ENCODE measurements at regions of chr9 and their contacts with region 1.

Region 1: DNA sequence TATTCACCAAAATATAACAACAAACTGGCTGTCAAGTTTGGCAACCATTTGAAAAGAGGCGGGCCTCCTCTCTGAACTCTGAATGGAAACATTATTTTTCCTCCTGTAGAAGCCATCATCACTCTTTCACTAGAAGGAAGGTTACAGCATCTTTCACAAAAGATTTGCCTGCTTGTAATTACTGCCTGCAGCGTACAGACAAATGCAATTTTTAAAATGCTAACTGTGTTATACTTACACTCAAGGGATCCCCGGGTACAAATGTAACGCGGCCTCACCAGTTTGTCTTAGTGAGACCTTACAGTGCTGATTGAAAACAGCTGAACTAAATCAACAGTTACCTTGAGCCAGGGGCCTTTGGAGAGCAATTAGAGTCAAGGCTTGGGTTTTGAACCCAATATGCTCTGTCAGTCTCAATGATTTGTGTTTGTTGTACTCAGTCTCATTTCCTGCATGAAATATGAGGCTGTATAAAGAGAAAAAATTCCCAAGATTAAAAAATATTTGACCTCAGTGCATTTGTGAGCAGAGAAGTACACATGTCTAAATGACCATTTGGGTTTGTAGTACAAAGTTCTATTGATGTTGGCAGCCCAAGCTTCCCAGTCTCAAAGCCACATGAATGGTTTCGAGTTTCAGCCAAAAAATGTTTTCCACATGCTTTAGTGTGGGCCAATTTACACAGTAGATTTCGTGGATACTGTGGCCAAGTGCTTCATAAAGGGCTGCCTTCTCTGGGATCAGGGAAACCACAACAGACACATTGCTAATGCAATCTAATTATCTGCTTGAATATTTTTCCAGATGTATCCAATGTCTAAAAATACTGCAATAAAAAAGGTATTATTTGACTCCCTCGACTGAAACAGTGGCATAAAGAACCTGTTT is 500.0 kb downstream of the SPATA31D1 start:
- DNase-seq: peak; percentile 81
- H3K4me3 ChIP-seq: no peak overlapping the region
- H3K27ac ChIP-seq: peak overlapping the region; percentile 72
- H3K4me1 ChIP-seq: peaks cover 18% of the 10 kb centered on the region
- H3K27me3 ChIP-seq: no peaks in the 10 kb centered on the region
- CTCF ChIP-seq: no peak

Region 2: GRCh38 chr9:82202808-82203207 is 285.7 kb before region 1 on chr9:
- CTCF ChIA-PET with region 1: no interaction called
- dilution Hi-C with region 1: no loop called
- in situ Hi-C with region 1: no loop called
- intact Hi-C with region 1: loop called (anchors 10 kb)
- DNase-seq: peak; percentile 81
- H3K4me3 ChIP-seq: no peak overlapping the region
- H3K27ac ChIP-seq: no peak overlapping the region
- H3K4me1 ChIP-seq: peaks cover 13% of the 10 kb centered on the region
- H3K27me3 ChIP-seq: no peaks in the 10 kb centered on the region
- CTCF ChIP-seq: no peak

Region 3: GRCh38 chr9:82271106-82271561 is 217.4 kb before region 1 on chr9:
- CTCF ChIA-PET with region 1: no interaction called
- dilution Hi-C with region 1: no loop called
- in situ Hi-C with region 1: no loop called
- intact Hi-C with region 1: loop called (anchors 10 kb)
- DNase-seq: peak; percentile 55
- H3K4me3 ChIP-seq: no peak overlapping the region
- H3K27ac ChIP-seq: no peak overlapping the region
- H3K4me1 ChIP-seq: peaks cover 16% of the 10 kb centered on the region
- H3K27me3 ChIP-seq: no peaks in the 10 kb centered on the region
- CTCF ChIP-seq: no peak

Region 4: DNA sequence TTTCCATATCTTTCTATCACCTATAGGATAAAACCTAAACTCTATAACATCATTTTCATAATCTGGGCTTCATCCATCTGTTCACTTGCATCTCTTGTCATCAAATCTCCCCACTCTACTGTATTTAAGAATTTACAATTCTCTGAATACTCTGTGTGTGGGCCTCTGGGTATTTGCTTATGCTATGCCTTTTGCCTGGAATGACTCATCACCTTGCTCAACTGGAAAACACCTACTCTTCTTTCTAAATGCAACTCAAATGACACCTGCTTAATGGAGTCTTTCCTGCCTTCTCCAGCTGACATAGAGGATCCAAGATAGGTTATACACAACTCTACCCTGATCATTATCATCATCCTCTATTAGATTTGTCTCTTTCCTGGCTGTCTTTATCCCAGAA is 78.3 kb before region 1 on chr9:
- CTCF ChIA-PET with region 1: no interaction called
- dilution Hi-C with region 1: no loop called
- in situ Hi-C with region 1: no loop called
- intact Hi-C with region 1: loop called (anchors 2 kb)
- DNase-seq: peak; percentile 81
- H3K4me3 ChIP-seq: no peak overlapping the region
- H3K27ac ChIP-seq: no peak overlapping the region
- H3K4me1 ChIP-seq: peaks cover 25% of the 10 kb centered on the region
- H3K27me3 ChIP-seq: no peaks in the 10 kb centered on the region
- CTCF ChIP-seq: no peak

Region 5: GRCh38 chr9:82539856-82540579 is 51.5 kb after region 1 on chr9:
- CTCF ChIA-PET with region 1: no interaction called
- dilution Hi-C with region 1: no loop called
- in situ Hi-C with region 1: no loop called
- intact Hi-C with region 1: no loop called
- DNase-seq: peak; percentile 82
- H3K4me3 ChIP-seq: no peak overlapping the region
- H3K27ac ChIP-seq: no peak overlapping the region
- H3K4me1 ChIP-seq: peaks cover 5% of the 10 kb centered on the region
- H3K27me3 ChIP-seq: no peaks in the 10 kb centered on the region
- CTCF ChIP-seq: no peak

Region 6: DNA sequence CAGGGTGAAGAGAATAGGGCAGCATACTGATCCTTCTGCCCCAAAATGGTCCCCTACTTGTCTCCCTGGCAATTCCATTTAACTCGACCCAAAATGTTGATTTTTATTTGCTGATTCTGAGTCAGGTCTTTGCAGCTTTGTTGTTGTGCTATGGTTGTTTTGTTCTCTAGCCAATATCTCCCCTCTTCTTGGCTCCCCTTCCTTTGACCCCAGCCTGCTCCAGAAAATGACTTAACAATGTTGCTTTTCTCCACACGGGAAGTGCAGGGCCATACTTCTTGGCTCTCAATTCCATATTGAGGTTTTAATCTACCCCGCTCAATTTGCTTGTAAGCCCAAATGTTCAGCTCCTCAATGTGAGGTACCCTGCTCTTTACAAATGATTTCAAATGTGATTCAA is 244.4 kb after region 1 on chr9:
- CTCF ChIA-PET with region 1: no interaction called
- dilution Hi-C with region 1: no loop called
- in situ Hi-C with region 1: no loop called
- intact Hi-C with region 1: no loop called
- DNase-seq: no peak
- H3K4me3 ChIP-seq: no peak overlapping the region
- H3K27ac ChIP-seq: no peak overlapping the region
- H3K4me1 ChIP-seq: no peaks in the 10 kb centered on the region
- H3K27me3 ChIP-seq: no peaks in the 10 kb centered on the region
- CTCF ChIP-seq: no peak

Region 7: DNA sequence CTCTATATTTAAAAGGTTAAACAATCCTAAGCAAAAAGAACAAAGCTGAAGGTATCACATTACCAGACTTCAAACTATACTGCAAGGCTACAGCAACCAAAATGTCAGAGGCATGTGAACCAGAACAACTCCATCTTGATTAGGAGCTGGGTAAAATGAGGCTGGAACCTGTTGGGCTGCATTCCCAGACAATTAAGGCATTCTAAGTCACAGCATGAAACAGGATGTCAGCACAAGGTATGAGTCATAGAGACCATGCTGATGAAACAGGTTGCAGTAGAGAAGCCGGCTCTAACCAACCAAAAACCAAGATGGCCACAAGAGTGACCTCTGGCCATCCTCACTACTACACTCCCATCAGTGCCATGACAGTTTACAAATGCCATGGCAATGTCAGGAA is 322.3 kb after region 1 on chr9:
- CTCF ChIA-PET with region 1: no interaction called
- dilution Hi-C with region 1: no loop called
- in situ Hi-C with region 1: no loop called
- intact Hi-C with region 1: no loop called
- DNase-seq: peak; percentile 92
- H3K4me3 ChIP-seq: no peak overlapping the region
- H3K27ac ChIP-seq: peak overlapping the region; percentile 53
- H3K4me1 ChIP-seq: peaks cover 10% of the 10 kb centered on the region
- H3K27me3 ChIP-seq: no peaks in the 10 kb centered on the region
- CTCF ChIP-seq: no peak

Measured in mammary epithelial cell (primary cell).